K562 (cell line): ENCODE measurements at regions of chr11 and their contacts with region 1.

Region 1: GRCh38 chr11:32562839-32563599 is 20.6 kb upstream of the EIF3M start:
- DNase-seq: no peak
- ATAC-seq: no peak
- H3K4me3 ChIP-seq: no peak overlapping the region
- H3K27ac ChIP-seq: no peak overlapping the region
- H3K4me1 ChIP-seq: peaks cover 0 to 3% of the 10 kb centered on the region in 2 experiments; a peak in 1 of 5 replicates
- H3K27me3 ChIP-seq: no peaks in the 10 kb centered on the region
- CTCF ChIP-seq: no peak
- EP300 ChIP-seq: no peak
- POLR2A ChIP-seq: no peak
- RAD21 ChIP-seq: no peak

Region 2: GRCh38 chr11:32323814-32324130 is 239.2 kb before region 1 on chr11:
- CTCF ChIA-PET with region 1: interaction called, 4 read pairs
- POLR2A ChIA-PET with region 1: no interaction called
- in situ Hi-C with region 1: no loop called
- intact Hi-C with region 1: loop called (anchors 5 kb)
- DNase-seq: no peak
- ATAC-seq: no peak
- H3K4me3 ChIP-seq: no peak overlapping the region
- H3K27ac ChIP-seq: no peak overlapping the region
- H3K4me1 ChIP-seq: no peaks in the 10 kb centered on the region
- H3K27me3 ChIP-seq: peaks cover 7 to 11% of the 10 kb centered on the region in 2 experiments; a peak in 3 of 5 replicates
- CTCF ChIP-seq: no peak
- EP300 ChIP-seq: no peak
- POLR2A ChIP-seq: no peak
- RAD21 ChIP-seq: no peak

Region 3: GRCh38 chr11:32385998-32386397 is 177.0 kb before region 1 on chr11:
- CTCF ChIA-PET with region 1: no interaction called
- POLR2A ChIA-PET with region 1: no interaction called
- in situ Hi-C with region 1: no loop called
- intact Hi-C with region 1: loop called (anchors 2 kb)
- DNase-seq: peak; percentile 53 to 68 (median 60)
- ATAC-seq: peak; percentile 86
- H3K4me3 ChIP-seq: no peak overlapping the region
- H3K27ac ChIP-seq: peak overlapping the region; percentile 59
- H3K4me1 ChIP-seq: peaks cover 4 to 30% of the 10 kb centered on the region in 2 experiments
- H3K27me3 ChIP-seq: no peaks in the 10 kb centered on the region
- CTCF ChIP-seq: peak; percentile 50 to 68 (median 67)
- EP300 ChIP-seq: peak; percentile 5; the same call in 1 of the 2 replicates
- POLR2A ChIP-seq: no peak
- RAD21 ChIP-seq: peak; percentile 50 to 72